BJ (cell line): ENCODE measurements at regions of chr6 and their contacts with region 1.

Region 1: DNA sequence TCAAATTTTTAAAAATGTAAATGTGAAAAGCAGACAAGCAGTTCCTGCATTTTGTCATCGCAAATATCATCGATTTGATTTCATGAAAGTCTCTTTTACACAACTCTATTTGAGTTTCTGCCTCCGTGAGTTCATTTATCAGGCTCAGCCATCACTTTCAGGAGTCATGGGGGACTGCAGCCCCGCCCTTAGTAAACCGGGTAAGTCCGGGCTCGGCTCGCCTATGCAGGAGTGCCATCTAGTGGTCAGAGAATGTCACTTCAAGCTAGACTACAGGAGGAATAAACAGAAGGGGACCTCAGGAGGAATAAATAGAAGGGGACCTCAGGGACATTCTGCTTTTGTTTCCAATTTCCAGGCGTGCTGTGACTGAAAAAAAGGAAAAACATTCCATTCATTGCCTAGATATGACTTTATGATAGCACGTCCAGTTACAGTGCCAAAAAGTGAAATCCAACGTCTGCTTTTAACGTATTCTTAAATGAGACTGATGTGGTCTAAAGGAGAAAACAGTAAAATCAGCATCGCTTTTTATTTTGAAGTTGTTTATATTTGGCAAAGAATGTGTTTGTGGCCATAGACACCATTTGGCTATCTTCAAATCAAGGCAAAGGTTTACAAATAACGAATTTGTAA is 333.9 kb downstream of the HACE1 start:
- DNase-seq: no peak
- H3K4me3 ChIP-seq: no peak overlapping the region
- H3K27me3 ChIP-seq: 0 out of 2 replicates have a peak, but pooled peaks cover 1% of the 10 kb centered on the region
- CTCF ChIP-seq: peak; percentile 93

Region 2: GRCh38 chr6:104500265-104500664 is 25.5 kb before region 1 on chr6:
- CTCF ChIA-PET with region 1: no interaction called
- POLR2A ChIA-PET with region 1: no interaction called
- DNase-seq: no peak
- H3K4me3 ChIP-seq: no peak overlapping the region
- H3K27me3 ChIP-seq: no peaks in the 10 kb centered on the region
- CTCF ChIP-seq: no peak

Region 3: DNA sequence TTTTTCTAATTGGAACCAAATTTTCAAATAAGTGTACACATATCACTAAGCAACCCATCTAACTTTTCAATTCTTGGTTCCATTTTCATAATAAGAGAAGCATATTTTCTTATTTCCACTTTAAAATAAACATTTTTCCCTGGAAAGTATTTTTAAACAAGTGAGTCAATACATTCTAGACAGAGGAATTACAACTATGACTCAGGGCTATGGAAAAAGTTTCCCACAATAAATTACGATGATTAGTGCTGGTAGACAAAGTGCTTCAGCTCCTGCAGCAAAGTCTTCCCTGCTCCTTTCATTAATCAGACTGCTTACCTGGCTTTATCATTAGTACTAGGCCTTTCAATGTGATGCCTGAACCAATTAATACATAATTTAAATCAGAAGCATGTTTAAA is 11.4 kb after region 1 on chr6:
- CTCF ChIA-PET with region 1: interaction called, 22 read pairs
- POLR2A ChIA-PET with region 1: no interaction called
- DNase-seq: peak; percentile 83
- H3K4me3 ChIP-seq: no peak overlapping the region
- H3K27me3 ChIP-seq: no peaks in the 10 kb centered on the region
- CTCF ChIP-seq: no peak